ENCODE measurements at regions of chr11 and their contacts with region 1.

Region 1: DNA sequence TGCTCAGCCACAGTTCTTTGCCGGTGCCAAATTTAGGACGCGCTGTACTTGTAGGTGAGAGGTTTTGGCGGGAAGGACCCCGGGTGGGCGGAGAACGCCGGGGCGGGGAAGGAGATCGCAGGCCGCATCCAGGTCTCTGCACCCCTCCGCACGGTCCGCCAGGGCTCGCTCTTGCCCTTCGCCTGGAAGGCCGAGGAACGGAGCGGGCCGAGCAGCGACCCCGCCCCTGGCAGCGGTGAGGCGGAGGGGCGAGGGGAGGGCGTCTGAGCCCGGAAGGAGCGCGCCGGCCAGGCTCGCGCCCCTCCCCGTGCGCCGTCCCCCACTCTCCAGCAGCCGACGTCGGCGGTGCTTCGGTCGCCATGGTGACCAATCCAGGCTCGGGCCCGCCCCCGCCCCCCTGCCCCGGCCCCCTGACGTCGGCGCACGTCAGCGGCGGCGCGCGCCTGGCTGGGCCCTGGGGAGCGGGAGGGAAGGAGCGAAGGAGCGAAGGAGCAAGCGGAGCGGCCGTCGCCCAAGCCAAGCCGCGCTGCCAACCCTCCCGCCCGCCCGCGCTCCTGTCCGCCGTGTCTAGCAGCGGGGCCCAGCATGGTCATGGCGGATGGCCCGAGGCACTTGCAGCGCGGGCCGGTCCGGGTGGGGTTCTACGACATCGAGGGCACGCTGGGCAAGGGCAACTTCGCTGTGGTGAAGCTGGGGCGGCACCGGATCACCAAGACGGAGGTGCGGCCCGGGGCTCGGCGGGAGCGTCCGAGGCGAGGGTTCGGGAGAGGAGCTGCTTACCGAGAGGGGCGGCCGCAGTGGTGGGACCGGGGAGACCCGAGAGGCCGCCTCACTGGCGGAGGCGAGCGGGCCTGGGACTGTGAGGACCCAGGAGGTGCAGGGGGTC is at the start of gene SIK2:
- DNase-seq: peak; percentile 83
- ATAC-seq: peak; percentile 90
- H3K4me3 Mint-ChIP-seq: peak within 1 kb of the TSS; percentile 92
- H3K27ac Mint-ChIP-seq: peak within 1 kb of the TSS; percentile 92
- H3K4me1 Mint-ChIP-seq: peaks cover 27% of the 10 kb centered on the region
- H3K27me3 Mint-ChIP-seq: no peaks in the 10 kb centered on the region
- CTCF ChIP-seq: no peak
- total RNA-seq, gene SIK2: 10.0 and 10.2 TPM in 2 replicates

Region 2: GRCh38 chr11:110296226-110297075 is 1305.8 kb before region 1 on chr11 and contains the start of gene RDX:
- CTCF ChIA-PET with region 1: no interaction called
- POLR2A ChIA-PET with region 1: no interaction called
- intact Hi-C with region 1: loop called (anchors 5 kb)
- DNase-seq: peak; percentile 74
- ATAC-seq: peak; percentile 83
- H3K4me3 Mint-ChIP-seq: peak within 1 kb of the TSS; percentile 87
- H3K27ac Mint-ChIP-seq: peak within 1 kb of the TSS; percentile 71
- H3K4me1 Mint-ChIP-seq: peaks cover 30% of the 10 kb centered on the region
- H3K27me3 Mint-ChIP-seq: no peaks in the 10 kb centered on the region
- CTCF ChIP-seq: no peak
- total RNA-seq, gene RDX: 27.4 and 27.9 TPM in 2 replicates

Region 3: DNA sequence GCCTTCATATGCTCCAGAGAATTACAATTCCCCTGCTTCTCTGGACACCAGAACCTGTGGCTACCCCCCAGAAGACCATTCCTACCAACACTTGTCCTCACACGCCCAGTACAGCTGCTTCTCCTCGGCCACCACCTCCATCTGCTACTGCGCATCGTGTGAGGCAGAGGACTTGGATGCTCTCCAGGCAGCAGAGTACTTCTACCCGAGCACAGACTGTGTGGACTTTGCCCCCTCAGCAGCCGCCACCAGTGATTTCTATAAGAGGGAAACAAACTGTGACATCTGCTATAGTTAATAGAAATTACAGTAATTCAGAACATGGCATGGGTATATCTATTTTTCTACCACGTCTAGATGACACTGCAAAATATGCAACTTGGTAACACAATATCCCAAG is 294.1 kb before region 1 on chr11:
- CTCF ChIA-PET with region 1: no interaction called
- POLR2A ChIA-PET with region 1: no interaction called
- intact Hi-C with region 1: no loop called
- DNase-seq: no peak
- ATAC-seq: no peak
- H3K4me3 Mint-ChIP-seq: no peak overlapping the region
- H3K27ac Mint-ChIP-seq: no peak overlapping the region
- H3K4me1 Mint-ChIP-seq: peaks cover 2% of the 10 kb centered on the region
- H3K27me3 Mint-ChIP-seq: peaks cover 3% of the 10 kb centered on the region
- CTCF ChIP-seq: no peak

Region 4: GRCh38 chr11:111541254-111542061 is 60.8 kb before region 1 on chr11:
- CTCF ChIA-PET with region 1: no interaction called
- POLR2A ChIA-PET with region 1: no interaction called
- intact Hi-C with region 1: no loop called
- DNase-seq: peak; percentile 20
- ATAC-seq: peak; percentile 18
- H3K4me3 Mint-ChIP-seq: peak overlapping the region; percentile 63
- H3K27ac Mint-ChIP-seq: no peak overlapping the region
- H3K4me1 Mint-ChIP-seq: peaks cover 15% of the 10 kb centered on the region
- H3K27me3 Mint-ChIP-seq: peaks cover 67% of the 10 kb centered on the region
- CTCF ChIP-seq: no peak

Region 5: GRCh38 chr11:111612224-111612623 is 10.0 kb after region 1 on chr11:
- CTCF ChIA-PET with region 1: interaction called, 4 read pairs
- POLR2A ChIA-PET with region 1: no interaction called
- intact Hi-C with region 1: loop called (anchors 1 kb)
- DNase-seq: no peak
- ATAC-seq: no peak
- H3K4me3 Mint-ChIP-seq: no peak overlapping the region
- H3K27ac Mint-ChIP-seq: no peak overlapping the region
- H3K4me1 Mint-ChIP-seq: peaks cover 9% of the 10 kb centered on the region
- H3K27me3 Mint-ChIP-seq: no peaks in the 10 kb centered on the region
- CTCF ChIP-seq: no peak

Region 6: DNA sequence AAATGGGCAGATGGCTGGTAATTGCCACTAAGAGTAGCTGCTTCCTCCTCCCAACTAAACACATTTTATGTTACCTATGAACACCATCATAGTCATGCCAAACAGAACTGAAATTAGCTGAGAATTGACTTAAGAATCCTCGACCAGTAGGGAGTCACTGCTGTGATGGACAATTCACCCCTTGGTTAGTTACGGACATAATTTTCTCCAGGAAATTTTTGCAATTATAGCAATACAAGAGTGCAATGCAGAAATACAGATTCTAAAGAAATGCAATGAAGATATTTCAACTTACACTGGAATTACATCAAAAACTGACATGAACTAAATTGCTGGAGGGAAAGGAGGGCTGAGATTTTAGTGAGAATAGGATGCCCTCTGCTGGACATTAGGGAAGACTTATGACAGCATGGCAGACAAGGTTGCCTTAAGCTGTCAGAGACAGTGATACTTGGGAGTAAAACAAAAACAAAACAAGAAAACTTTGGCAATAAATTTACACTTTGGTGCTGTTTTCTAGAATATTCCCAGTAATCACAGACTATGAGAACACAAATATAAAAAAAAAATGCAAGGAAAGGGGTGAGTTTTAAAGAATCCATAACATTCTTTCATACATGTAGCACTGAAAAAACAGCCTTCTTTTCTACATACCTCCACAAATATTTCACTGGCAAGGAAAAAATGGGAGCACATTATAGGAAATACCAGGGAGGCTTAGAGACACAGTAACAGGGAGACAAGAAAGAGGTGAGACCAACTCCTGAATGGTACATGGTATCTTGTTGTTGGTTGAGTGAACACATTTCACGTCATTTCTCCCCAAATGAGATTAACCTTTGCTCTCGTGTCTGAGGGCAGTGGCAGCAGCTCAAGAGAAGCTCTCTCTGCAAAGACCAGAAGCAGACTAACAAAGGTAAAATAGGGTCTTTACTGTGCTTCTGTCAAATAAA is 175.1 kb after region 1 on chr11:
- CTCF ChIA-PET with region 1: interaction called, 22 read pairs
- POLR2A ChIA-PET with region 1: interaction called, 4 read pairs
- intact Hi-C with region 1: loop called (anchors 1 kb)
- DNase-seq: no peak
- ATAC-seq: peak; percentile 72
- H3K4me3 Mint-ChIP-seq: peak overlapping the region; percentile 35
- H3K27ac Mint-ChIP-seq: peak overlapping the region; percentile 72
- H3K4me1 Mint-ChIP-seq: peaks cover 23% of the 10 kb centered on the region
- H3K27me3 Mint-ChIP-seq: no peaks in the 10 kb centered on the region
- CTCF ChIP-seq: no peak

Region 7: GRCh38 chr11:111870886-111871692 is 268.9 kb after region 1 on chr11 and contains the start of gene ALG9:
- CTCF ChIA-PET with region 1: no interaction called
- POLR2A ChIA-PET with region 1: interaction called, 4 read pairs
- intact Hi-C with region 1: loop called (anchors 2 kb)
- DNase-seq: peak; percentile 90
- ATAC-seq: peak; percentile 89
- H3K4me3 Mint-ChIP-seq: peak within 1 kb of the TSS; percentile 93
- H3K27ac Mint-ChIP-seq: peak within 1 kb of the TSS; percentile 92
- H3K4me1 Mint-ChIP-seq: peaks cover 13% of the 10 kb centered on the region
- H3K27me3 Mint-ChIP-seq: no peaks in the 10 kb centered on the region
- CTCF ChIP-seq: no peak
- total RNA-seq, gene ALG9: 17.0 and 20.1 TPM in 2 replicates

Region 8: GRCh38 chr11:112024773-112025678 is 422.8 kb after region 1 on chr11 and contains the start of gene DLAT:
- CTCF ChIA-PET with region 1: no interaction called
- POLR2A ChIA-PET with region 1: interaction called, 3 read pairs
- intact Hi-C with region 1: loop called (anchors 5 kb)
- DNase-seq: peak; percentile 78
- ATAC-seq: peak; percentile 77
- H3K4me3 Mint-ChIP-seq: peak within 1 kb of the TSS; percentile 100
- H3K27ac Mint-ChIP-seq: peak within 1 kb of the TSS; percentile 100
- H3K4me1 Mint-ChIP-seq: peaks cover 37% of the 10 kb centered on the region
- H3K27me3 Mint-ChIP-seq: no peaks in the 10 kb centered on the region
- CTCF ChIP-seq: no peak
- total RNA-seq, gene DLAT: 27.5 and 31.5 TPM in 2 replicates

Region 9: DNA sequence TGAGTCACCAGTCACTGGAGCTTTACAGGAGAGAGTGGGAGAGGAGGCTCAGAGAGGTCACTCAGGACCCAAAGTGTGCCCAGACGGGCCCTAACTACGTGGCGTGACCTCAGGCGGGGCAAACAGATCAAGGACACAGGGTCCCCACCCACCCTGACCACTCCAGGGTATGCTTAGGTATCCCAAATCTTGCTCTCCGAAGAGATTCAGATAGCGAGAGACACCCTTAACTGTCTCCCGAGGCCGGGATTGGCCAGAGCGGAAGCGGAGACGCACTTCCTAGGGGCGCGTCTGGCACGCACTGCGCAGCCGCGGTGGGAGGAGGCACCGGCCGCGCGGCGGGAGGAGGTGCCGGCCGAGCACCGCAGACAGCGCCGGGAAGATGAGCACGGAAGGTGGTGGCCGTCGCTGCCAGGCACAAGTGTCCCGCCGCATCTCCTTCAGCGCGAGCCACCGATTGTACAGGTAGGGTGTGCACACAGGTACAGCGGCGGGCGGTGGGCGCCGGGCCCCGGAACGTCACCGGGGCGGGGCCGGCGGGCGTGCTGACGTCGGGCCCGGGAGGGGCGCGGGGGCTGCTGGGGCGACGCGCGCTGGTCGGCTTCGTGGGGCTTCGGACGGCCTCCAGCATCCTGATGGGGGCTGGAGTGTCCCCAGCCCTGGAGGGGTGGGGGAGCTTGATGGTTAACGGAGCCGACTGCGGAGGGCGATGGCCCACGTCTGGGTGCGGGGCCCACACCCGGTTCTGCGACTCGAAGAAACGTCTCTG is 624.0 kb after region 1 on chr11 and contains the start of gene PTS:
- CTCF ChIA-PET with region 1: no interaction called
- POLR2A ChIA-PET with region 1: no interaction called
- intact Hi-C with region 1: loop called (anchors 2 kb)
- DNase-seq: peak; percentile 87
- ATAC-seq: peak; percentile 93
- H3K4me3 Mint-ChIP-seq: peak within 1 kb of the TSS; percentile 92
- H3K27ac Mint-ChIP-seq: peak within 1 kb of the TSS; percentile 96
- H3K4me1 Mint-ChIP-seq: peaks cover 13% of the 10 kb centered on the region
- H3K27me3 Mint-ChIP-seq: no peaks in the 10 kb centered on the region
- CTCF ChIP-seq: no peak
- total RNA-seq, gene PTS: 22.7 and 30.4 TPM in 2 replicates

Measured in activated B cell treated with CpG ODN at 0.5 μM for 24 hours (primary cell).